Activated T-helper 2 cell treated with anti-CD3 and anti-CD28 coated beads, Interferon-gamma antibody, Interleukin-2, Interleukin-4, amounts not matched to agents 10 μg/mL and 5 μg/mL and 100 μg/mL, durations not matched to agents 14 hours and 24 hours and 36 hours (primary cell): ENCODE measurements at regions of chr17 and their contacts with region 1.

Region 1: GRCh38 chr17:33113276-33113990 is 121.8 kb downstream of the SPACA3 start:
- DNase-seq: no peak
- H3K4me3 Mint-ChIP-seq: no peak overlapping the region
- H3K27ac Mint-ChIP-seq: no peak overlapping the region
- H3K4me1 Mint-ChIP-seq: no peaks in the 10 kb centered on the region
- H3K27me3 Mint-ChIP-seq: no peaks in the 10 kb centered on the region

Region 2: DNA sequence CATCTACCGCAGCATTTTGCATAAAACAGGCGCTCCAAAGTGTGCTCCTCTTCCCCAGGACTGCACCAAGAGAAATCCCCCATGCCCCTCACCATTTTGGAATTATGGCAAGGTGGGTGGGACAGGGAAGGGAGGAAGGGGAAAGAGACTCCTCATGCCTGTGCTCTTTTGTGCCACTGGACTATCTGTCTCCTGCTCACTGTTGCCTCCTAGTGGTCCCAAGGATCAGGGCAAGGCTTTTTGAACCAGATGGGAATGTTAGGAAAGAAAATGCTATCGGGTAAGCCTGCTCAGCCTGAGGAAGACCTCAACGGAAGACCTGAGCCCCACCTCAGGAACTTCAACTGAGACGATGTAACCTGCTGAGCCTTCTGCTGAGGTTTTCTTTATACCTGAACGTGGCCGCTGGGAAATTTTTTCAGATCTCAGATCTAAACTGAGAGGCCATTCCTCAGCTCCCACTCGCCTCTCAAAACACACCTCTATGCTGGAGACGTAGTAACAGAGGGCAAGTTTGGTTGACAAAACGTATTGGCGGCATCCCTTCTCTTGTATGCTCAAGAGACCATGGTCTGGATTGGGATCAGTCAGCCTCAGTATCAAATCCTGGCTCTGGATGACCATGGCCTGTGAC is 63.5 kb before region 1 on chr17:
- intact Hi-C with region 1: loop called (anchors 10 kb)
- DNase-seq: no peak
- H3K4me3 Mint-ChIP-seq: no peak overlapping the region
- H3K27ac Mint-ChIP-seq: no peak overlapping the region
- H3K4me1 Mint-ChIP-seq: no peaks in the 10 kb centered on the region
- H3K27me3 Mint-ChIP-seq: peaks cover 5% of the 10 kb centered on the region

Region 3: GRCh38 chr17:33097411-33097810 is 16.0 kb before region 1 on chr17:
- intact Hi-C with region 1: no loop called
- DNase-seq: no peak
- H3K4me3 Mint-ChIP-seq: no peak overlapping the region
- H3K27ac Mint-ChIP-seq: no peak overlapping the region
- H3K4me1 Mint-ChIP-seq: no peaks in the 10 kb centered on the region
- H3K27me3 Mint-ChIP-seq: peaks cover 12% of the 10 kb centered on the region

Region 4: DNA sequence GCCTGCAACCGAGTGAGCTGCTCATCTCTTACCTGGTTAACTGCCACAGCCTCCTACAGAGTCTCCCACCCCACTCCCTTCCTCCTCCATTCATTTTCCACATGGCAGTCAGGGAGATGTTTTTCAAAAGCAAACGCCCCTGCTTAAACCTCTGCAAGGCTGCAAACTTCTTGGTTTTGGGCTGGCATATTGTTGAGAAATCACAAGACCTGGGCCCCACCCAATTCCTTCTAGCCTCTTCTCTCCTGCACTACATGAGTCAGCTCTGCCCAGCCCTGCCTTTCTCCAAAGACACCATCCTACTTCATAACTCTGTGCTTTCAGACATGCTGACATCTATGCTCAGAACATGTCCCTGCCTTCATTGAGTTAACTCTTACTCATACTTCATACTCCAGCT is 14.3 kb after region 1 on chr17:
- intact Hi-C with region 1: no loop called
- DNase-seq: no peak
- H3K4me3 Mint-ChIP-seq: no peak overlapping the region
- H3K27ac Mint-ChIP-seq: no peak overlapping the region
- H3K4me1 Mint-ChIP-seq: no peaks in the 10 kb centered on the region
- H3K27me3 Mint-ChIP-seq: no peaks in the 10 kb centered on the region